ENCODE measurements at regions of chr10 and their contacts with region 1.

Region 1: DNA sequence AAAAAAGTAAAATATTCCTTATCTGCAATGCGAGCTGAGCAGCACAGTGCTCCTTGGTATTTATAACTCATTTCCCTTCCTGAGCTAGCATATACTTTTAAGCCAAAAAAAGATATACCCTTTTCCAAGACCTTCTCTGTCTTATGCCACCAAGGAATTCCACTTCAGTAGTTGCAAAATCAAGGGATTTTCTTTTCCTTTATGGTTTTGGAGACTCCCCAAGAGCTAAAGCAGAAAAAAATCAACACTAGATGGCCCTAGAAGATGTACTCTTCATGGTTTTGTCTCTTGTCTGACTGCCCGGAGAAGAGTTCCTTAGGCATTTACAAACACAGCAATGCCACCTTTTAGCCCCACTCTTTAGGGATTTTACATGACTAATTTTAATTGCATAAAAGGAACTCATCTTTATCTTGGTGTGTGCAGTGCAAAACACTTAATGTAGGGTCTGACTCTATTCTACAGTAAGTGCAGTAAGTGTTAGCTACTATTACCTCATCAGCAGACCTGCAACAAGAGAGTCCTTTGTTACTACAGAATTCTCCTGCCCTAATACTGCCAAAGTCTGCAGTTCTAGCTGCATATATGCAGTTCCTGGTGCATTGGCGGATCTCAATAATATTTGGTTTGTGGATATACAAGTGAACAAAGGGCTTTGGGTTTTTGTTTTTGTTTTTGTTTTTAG is 443.3 kb downstream of the GFRA1 start:
- DNase-seq: peak; percentile 75
- ATAC-seq: peak; percentile 63
- H3K4me3 ChIP-seq: no peak overlapping the region
- H3K27ac ChIP-seq: no peak overlapping the region
- H3K4me1 ChIP-seq: peaks cover 8% of the 10 kb centered on the region
- H3K27me3 ChIP-seq: no peaks in the 10 kb centered on the region
- CTCF ChIP-seq: peak; percentile 54
- POLR2A ChIP-seq: no peak
- RAD21 ChIP-seq: peak; percentile 48

Region 2: GRCh38 chr10:115379064-115379463 is 450.6 kb before region 1 on chr10:
- CTCF ChIA-PET with region 1: no interaction called
- POLR2A ChIA-PET with region 1: no interaction called
- dilution Hi-C with region 1: no loop called
- in situ Hi-C with region 1: no loop called
- intact Hi-C with region 1: no loop called
- DNase-seq: no peak
- ATAC-seq: no peak
- H3K4me3 ChIP-seq: no peak overlapping the region
- H3K27ac ChIP-seq: no peak overlapping the region
- H3K4me1 ChIP-seq: no peaks in the 10 kb centered on the region
- H3K27me3 ChIP-seq: no peaks in the 10 kb centered on the region
- CTCF ChIP-seq: no peak
- POLR2A ChIP-seq: no peak
- RAD21 ChIP-seq: no peak

Region 3: DNA sequence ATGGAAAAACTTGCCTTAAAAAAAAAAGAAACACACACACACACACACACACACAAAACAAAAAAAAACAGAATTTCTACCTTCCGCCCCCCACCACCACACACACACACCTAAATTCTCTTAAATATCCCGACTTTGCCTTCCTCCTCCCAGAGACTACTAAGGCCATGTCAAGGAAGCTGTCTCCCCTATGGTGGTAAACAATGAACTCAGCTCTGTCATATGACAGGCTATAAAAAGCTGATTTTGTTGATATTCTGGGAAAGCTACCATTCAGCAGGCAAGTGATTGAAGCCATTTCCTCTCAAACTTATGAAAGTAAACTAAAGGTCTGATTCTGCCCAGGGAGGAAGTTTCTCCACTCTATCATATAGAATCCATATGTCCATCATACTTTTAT is 27.7 kb before region 1 on chr10:
- CTCF ChIA-PET with region 1: interaction called, 13 read pairs
- POLR2A ChIA-PET with region 1: no interaction called
- dilution Hi-C with region 1: no loop called
- in situ Hi-C with region 1: no loop called
- intact Hi-C with region 1: no loop called
- DNase-seq: peak; percentile 3
- ATAC-seq: no peak
- H3K4me3 ChIP-seq: no peak overlapping the region
- H3K27ac ChIP-seq: no peak overlapping the region
- H3K4me1 ChIP-seq: no peaks in the 10 kb centered on the region
- H3K27me3 ChIP-seq: no peaks in the 10 kb centered on the region
- CTCF ChIP-seq: no peak
- POLR2A ChIP-seq: no peak
- RAD21 ChIP-seq: no peak

Region 4: GRCh38 chr10:115931309-115931708 is 101.6 kb after region 1 on chr10:
- CTCF ChIA-PET with region 1: no interaction called
- POLR2A ChIA-PET with region 1: interaction called, 10 read pairs
- dilution Hi-C with region 1: no loop called
- in situ Hi-C with region 1: no loop called
- intact Hi-C with region 1: no loop called
- DNase-seq: no peak
- ATAC-seq: no peak
- H3K4me3 ChIP-seq: no peak overlapping the region
- H3K27ac ChIP-seq: no peak overlapping the region
- H3K4me1 ChIP-seq: no peaks in the 10 kb centered on the region
- H3K27me3 ChIP-seq: no peaks in the 10 kb centered on the region
- CTCF ChIP-seq: no peak
- POLR2A ChIP-seq: no peak
- RAD21 ChIP-seq: no peak

Region 5: DNA sequence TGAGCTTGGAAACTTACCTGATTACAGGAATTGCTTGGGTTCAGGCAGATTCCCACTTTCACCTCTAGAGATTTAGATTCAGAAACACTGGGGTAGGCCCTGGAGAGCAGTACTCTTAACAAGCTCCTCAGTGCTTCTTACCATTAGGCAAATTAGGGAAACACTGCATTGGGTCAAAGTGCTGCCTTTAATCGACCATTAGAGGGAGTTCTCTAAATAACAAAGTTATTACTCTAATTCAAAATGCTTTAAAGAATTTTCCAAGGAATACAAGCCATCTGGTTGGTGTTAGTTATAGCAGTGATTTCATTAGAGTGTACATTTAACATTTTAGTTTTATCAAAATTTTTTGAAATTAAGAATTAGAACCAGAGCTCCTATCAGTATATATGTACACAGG is 118.8 kb after region 1 on chr10:
- CTCF ChIA-PET with region 1: interaction called, 15 read pairs
- POLR2A ChIA-PET with region 1: no interaction called
- dilution Hi-C with region 1: no loop called
- in situ Hi-C with region 1: no loop called
- intact Hi-C with region 1: loop called (anchors 1 kb)
- DNase-seq: peak; percentile 33
- ATAC-seq: peak; percentile 22
- H3K4me3 ChIP-seq: no peak overlapping the region
- H3K27ac ChIP-seq: no peak overlapping the region
- H3K4me1 ChIP-seq: peaks cover 16% of the 10 kb centered on the region
- H3K27me3 ChIP-seq: no peaks in the 10 kb centered on the region
- CTCF ChIP-seq: peak; percentile 42
- POLR2A ChIP-seq: no peak
- RAD21 ChIP-seq: no peak

Region 6: GRCh38 chr10:116170815-116171250 is 341.2 kb after region 1 on chr10:
- CTCF ChIA-PET with region 1: no interaction called
- POLR2A ChIA-PET with region 1: no interaction called
- dilution Hi-C with region 1: no loop called
- in situ Hi-C with region 1: no loop called
- intact Hi-C with region 1: loop called (anchors 10 kb)
- DNase-seq: peak; percentile 26
- ATAC-seq: peak; percentile 83
- H3K4me3 ChIP-seq: no peak overlapping the region
- H3K27ac ChIP-seq: no peak overlapping the region
- H3K4me1 ChIP-seq: no peaks in the 10 kb centered on the region
- H3K27me3 ChIP-seq: no peaks in the 10 kb centered on the region
- CTCF ChIP-seq: no peak
- POLR2A ChIP-seq: no peak
- RAD21 ChIP-seq: no peak

Region 7: DNA sequence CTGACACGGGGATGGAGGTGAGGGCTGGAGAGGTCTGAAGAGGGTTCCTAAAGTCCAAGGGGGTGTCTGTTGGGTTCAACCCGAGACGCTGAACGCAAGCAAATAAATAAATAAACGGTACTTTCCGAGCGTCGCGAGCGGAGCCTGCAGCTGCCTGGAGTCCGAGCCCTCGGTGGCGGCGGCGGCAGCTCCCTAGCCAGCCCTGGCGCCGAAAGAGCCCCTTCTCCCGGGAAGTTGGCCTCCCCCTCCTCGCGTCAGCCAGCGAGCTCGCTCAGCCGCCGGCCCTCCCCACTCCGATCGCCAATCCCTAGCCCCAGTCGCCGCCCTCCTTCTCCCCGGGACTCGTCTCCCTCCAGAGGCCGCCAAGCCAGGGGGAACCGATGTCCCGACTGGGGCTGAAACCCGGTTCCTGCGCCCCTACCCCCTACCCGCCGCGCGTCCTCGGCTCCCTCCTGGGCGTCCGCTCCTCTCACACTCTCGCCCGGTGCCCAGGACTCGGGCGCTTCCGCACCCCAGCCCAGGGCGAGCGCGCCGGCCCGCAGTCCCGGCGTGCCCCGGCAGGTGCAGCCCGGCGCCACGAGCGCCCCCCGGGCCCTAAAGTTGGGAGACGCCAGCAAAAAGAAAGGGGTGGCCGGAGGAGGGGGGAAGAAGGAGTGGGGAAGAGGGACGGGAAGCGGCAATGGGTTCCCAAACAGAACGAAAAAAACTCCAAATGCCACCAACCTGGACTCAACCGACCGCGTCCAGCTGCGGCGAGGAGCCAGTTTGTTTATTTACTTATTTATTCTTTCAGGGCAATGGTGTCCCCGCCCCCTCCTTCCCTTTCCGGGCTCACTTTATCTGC is 443.0 kb after region 1 on chr10 and contains the start of gene GFRA1:
- CTCF ChIA-PET with region 1: interaction called, 7 read pairs
- POLR2A ChIA-PET with region 1: no interaction called
- dilution Hi-C with region 1: no loop called
- in situ Hi-C with region 1: no loop called
- intact Hi-C with region 1: loop called (anchors 2 kb)
- DNase-seq: peak; percentile 7
- ATAC-seq: peak; percentile 38
- H3K4me3 ChIP-seq: peak within 1 kb of the TSS; percentile 47
- H3K27ac ChIP-seq: no peak within 1 kb of the TSS
- H3K4me1 ChIP-seq: no peaks in the 10 kb centered on the region; the same call in 1 of the 2 replicates
- H3K27me3 ChIP-seq: peaks cover 50% of the 10 kb centered on the region
- CTCF ChIP-seq: 0 out of 2 replicates have a peak, but pooled peaks have one; percentile 5
- POLR2A ChIP-seq: no peak
- RAD21 ChIP-seq: no peak; the same call in 1 of the 2 replicates
- total RNA-seq, gene GFRA1: 8.6 and 9.1 TPM in 2 replicates

Region 8: DNA sequence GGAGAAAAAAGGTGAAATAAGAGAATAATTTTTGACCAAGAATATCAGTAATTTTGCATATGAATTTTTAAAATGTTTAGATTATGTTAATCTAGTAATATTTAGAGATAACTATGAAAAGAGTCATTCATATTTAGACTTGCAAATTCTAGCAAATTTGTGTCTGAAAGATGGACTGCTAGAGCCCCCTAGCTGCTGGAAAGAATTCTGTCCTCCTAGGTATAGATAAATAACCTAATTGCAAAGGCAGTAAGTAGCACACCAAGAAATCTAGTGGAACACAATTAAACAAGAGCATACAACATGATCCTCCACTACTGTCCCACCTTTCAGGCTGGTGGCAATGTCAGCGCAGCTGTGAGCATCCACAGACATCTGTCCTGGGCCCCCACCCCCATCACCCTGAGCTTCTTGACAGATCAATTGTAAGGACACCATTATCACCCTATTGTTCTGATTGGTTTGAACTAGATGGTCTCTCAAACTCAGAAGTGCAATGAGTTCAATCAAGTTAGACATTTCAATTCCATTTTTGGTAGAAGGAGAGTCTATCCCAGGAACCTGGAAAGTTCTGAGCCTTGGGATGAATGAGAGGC is 458.3 kb after region 1 on chr10:
- CTCF ChIA-PET with region 1: interaction called, 12 read pairs
- POLR2A ChIA-PET with region 1: no interaction called
- dilution Hi-C with region 1: no loop called
- in situ Hi-C with region 1: no loop called
- intact Hi-C with region 1: loop called (anchors 1 kb)
- DNase-seq: peak; percentile 64
- ATAC-seq: peak; percentile 78; the same call in 1 of the 2 replicates
- H3K4me3 ChIP-seq: no peak overlapping the region
- H3K27ac ChIP-seq: no peak overlapping the region
- H3K4me1 ChIP-seq: no peaks in the 10 kb centered on the region
- H3K27me3 ChIP-seq: peaks cover 2% of the 10 kb centered on the region; the same call in 1 of the 2 replicates
- CTCF ChIP-seq: peak; percentile 94
- POLR2A ChIP-seq: no peak
- RAD21 ChIP-seq: peak; percentile 92